ENCODE measurements at regions of chr4 and their contacts with region 1.

Region 1: GRCh38 chr4:169810325-169811323 is 52.9 kb upstream of the HPF1 start:
- DNase-seq: peak; percentile 49
- ATAC-seq: no peak
- H3K4me3 Mint-ChIP-seq: no peak overlapping the region
- H3K27ac Mint-ChIP-seq: no peak overlapping the region
- H3K4me1 Mint-ChIP-seq: no peaks in the 10 kb centered on the region
- H3K27me3 Mint-ChIP-seq: peaks cover 7% of the 10 kb centered on the region

Region 2: GRCh38 chr4:169612871-169613859 is 197.5 kb before region 1 on chr4:
- CTCF ChIA-PET with region 1: interaction called, 25 read pairs
- POLR2A ChIA-PET with region 1: interaction called, 5 read pairs
- DNase-seq: peak; percentile 81
- ATAC-seq: peak; percentile 31
- H3K4me3 Mint-ChIP-seq: peak overlapping the region; percentile 97
- H3K27ac Mint-ChIP-seq: peak overlapping the region; percentile 99
- H3K4me1 Mint-ChIP-seq: peaks cover 50% of the 10 kb centered on the region
- H3K27me3 Mint-ChIP-seq: no peaks in the 10 kb centered on the region

Region 3: GRCh38 chr4:169690787-169691186 is 119.8 kb before region 1 on chr4:
- CTCF ChIA-PET with region 1: no interaction called
- POLR2A ChIA-PET with region 1: no interaction called
- DNase-seq: no peak
- ATAC-seq: no peak
- H3K4me3 Mint-ChIP-seq: no peak overlapping the region
- H3K27ac Mint-ChIP-seq: no peak overlapping the region
- H3K4me1 Mint-ChIP-seq: peaks cover 6% of the 10 kb centered on the region
- H3K27me3 Mint-ChIP-seq: no peaks in the 10 kb centered on the region

Region 4: GRCh38 chr4:169791527-169792156 is 19.0 kb before region 1 on chr4:
- CTCF ChIA-PET with region 1: interaction called, 12 read pairs
- POLR2A ChIA-PET with region 1: no interaction called
- DNase-seq: peak; percentile 26
- ATAC-seq: peak; percentile 51
- H3K4me3 Mint-ChIP-seq: no peak overlapping the region
- H3K27ac Mint-ChIP-seq: no peak overlapping the region
- H3K4me1 Mint-ChIP-seq: peaks cover 6% of the 10 kb centered on the region
- H3K27me3 Mint-ChIP-seq: peaks cover 20% of the 10 kb centered on the region

Region 5: DNA sequence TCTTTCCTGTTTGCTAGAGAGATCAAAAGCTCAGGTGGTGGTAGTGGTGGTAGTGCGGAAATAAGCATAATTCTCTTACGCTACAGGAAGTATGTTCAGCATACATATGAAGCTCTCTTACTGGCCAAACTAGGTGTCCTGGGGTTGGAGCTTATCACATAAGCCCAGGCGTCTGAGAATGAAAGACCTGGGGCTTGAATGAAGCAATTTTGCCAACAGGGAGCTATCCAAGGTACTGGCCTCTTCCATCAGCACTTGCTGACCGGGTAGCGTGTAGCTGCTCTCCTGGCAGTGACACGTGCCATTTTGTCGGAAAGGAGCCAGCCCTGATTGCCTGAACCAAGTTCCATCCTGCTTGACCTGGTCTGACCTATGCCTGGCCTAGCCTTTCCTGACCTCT is 13.1 kb after region 1 on chr4:
- CTCF ChIA-PET with region 1: interaction called, 16 read pairs
- POLR2A ChIA-PET with region 1: no interaction called
- DNase-seq: peak; percentile 64
- ATAC-seq: peak; percentile 84
- H3K4me3 Mint-ChIP-seq: no peak overlapping the region
- H3K27ac Mint-ChIP-seq: peak overlapping the region; percentile 21
- H3K4me1 Mint-ChIP-seq: peaks cover 12% of the 10 kb centered on the region
- H3K27me3 Mint-ChIP-seq: no peaks in the 10 kb centered on the region

Region 6: GRCh38 chr4:169854090-169854489 is 43.5 kb after region 1 on chr4:
- CTCF ChIA-PET with region 1: no interaction called
- POLR2A ChIA-PET with region 1: no interaction called
- DNase-seq: no peak
- ATAC-seq: no peak
- H3K4me3 Mint-ChIP-seq: no peak overlapping the region
- H3K27ac Mint-ChIP-seq: no peak overlapping the region
- H3K4me1 Mint-ChIP-seq: no peaks in the 10 kb centered on the region
- H3K27me3 Mint-ChIP-seq: peaks cover 5% of the 10 kb centered on the region

Region 7: GRCh38 chr4:170027181-170027829 is 216.7 kb after region 1 on chr4:
- CTCF ChIA-PET with region 1: interaction called, 10 read pairs
- POLR2A ChIA-PET with region 1: no interaction called
- DNase-seq: peak; percentile 91
- ATAC-seq: peak; percentile 70
- H3K4me3 Mint-ChIP-seq: peak overlapping the region; percentile 85
- H3K27ac Mint-ChIP-seq: peak overlapping the region; percentile 67
- H3K4me1 Mint-ChIP-seq: peaks cover 17% of the 10 kb centered on the region
- H3K27me3 Mint-ChIP-seq: peaks cover 58% of the 10 kb centered on the region

Region 8: DNA sequence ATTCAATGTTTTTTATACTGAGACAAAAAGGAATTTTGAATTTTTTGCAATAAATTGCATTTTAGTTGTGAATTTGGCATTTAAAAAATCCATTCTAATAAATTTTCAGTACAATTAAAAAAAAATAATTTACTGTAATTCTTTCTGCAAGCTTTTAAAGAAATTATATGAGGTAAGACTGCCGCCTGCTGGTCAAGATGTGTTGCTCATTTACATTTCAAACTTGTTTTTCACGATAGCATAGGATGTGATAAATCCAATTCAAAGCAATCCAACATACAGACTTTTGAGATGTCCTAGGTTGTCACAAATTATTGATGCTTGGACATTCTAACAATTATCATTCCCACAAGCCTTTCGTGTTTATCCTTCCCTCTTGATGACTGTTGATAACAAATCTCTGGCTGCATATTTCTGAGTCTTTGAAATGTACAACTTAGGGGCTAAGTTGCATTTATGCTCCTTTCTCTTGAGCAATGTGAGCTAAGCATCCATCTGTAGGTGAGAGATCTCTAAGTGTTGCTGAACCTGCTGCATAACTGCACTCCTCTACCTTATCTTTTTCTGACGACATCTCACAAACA is 237.2 kb after region 1 on chr4:
- CTCF ChIA-PET with region 1: interaction called, 28 read pairs
- POLR2A ChIA-PET with region 1: no interaction called
- DNase-seq: peak; percentile 69
- ATAC-seq: no peak
- H3K4me3 Mint-ChIP-seq: no peak overlapping the region
- H3K27ac Mint-ChIP-seq: no peak overlapping the region
- H3K4me1 Mint-ChIP-seq: no peaks in the 10 kb centered on the region
- H3K27me3 Mint-ChIP-seq: no peaks in the 10 kb centered on the region

Region 9: GRCh38 chr4:170057866-170058265 is 247.2 kb after region 1 on chr4:
- CTCF ChIA-PET with region 1: no interaction called
- POLR2A ChIA-PET with region 1: no interaction called
- DNase-seq: no peak
- ATAC-seq: no peak
- H3K4me3 Mint-ChIP-seq: no peak overlapping the region
- H3K27ac Mint-ChIP-seq: no peak overlapping the region
- H3K4me1 Mint-ChIP-seq: no peaks in the 10 kb centered on the region
- H3K27me3 Mint-ChIP-seq: peaks cover 10% of the 10 kb centered on the region

Region 10: GRCh38 chr4:170138580-170139194 is 328.1 kb after region 1 on chr4:
- CTCF ChIA-PET with region 1: no interaction called
- POLR2A ChIA-PET with region 1: no interaction called
- DNase-seq: peak; percentile 76
- ATAC-seq: peak; percentile 84
- H3K4me3 Mint-ChIP-seq: no peak overlapping the region
- H3K27ac Mint-ChIP-seq: no peak overlapping the region
- H3K4me1 Mint-ChIP-seq: peaks cover 3% of the 10 kb centered on the region
- H3K27me3 Mint-ChIP-seq: no peaks in the 10 kb centered on the region

Measured in activated CD8-positive, alpha-beta T cell treated with anti-CD3 and anti-CD28 coated beads, Interleukin-2, amount 10 ng/mL, durations not matched to agents 7 days and 5 days (primary cell).